Activated CD4-positive, alpha-beta memory T cell treated with anti-CD3 and anti-CD28 coated beads for 36 hours (primary cell): ENCODE measurements at regions of chr7 and their contacts with region 1.

Region 1: DNA sequence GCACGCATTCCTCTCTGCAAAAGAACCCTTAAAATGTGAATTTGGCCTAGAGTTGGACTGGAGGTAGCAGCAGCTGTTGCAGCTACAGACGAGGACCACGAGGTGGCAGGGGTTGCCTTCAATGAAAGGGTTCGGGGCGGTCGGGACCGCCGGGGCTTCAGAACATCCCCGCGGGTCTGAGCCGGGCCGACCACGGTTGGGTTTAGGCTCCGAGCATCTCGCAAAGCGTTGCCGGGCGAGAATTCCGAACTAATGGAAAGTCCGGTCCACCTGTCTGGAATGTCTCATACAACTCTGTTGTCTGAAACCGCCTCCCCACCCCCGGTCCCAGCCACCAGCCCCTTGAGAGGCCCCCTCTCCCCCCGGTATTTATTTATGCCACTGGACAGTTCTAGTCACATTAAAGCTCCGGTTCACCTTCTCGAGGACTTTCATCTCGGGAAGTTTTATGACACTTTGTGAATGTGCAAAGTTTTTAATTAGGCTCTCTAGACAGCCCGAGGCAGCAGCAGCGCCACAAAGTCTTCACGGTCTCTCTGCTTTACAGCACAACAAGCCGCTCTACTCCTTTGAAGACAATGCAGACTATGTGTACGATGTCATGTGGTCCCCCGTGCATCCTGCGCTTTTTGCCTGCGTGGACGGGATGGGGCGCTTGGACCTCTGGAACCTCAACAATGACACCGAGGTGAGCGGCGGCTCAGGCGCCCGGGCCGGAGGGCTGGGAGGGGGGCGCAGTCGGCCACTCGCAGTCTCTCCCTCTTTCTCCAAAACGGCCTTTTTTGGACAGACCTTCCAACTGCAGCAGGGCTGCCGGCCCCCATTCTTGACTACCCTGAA is 246.2 kb downstream of the SLC25A13 start:
- DNase-seq: peak; percentile 58
- H3K4me3 Mint-ChIP-seq: peak overlapping the region; percentile 53
- H3K27ac Mint-ChIP-seq: no peak overlapping the region
- H3K4me1 Mint-ChIP-seq: peaks cover 7% of the 10 kb centered on the region
- H3K27me3 Mint-ChIP-seq: peaks cover 20% of the 10 kb centered on the region

Region 2: GRCh38 chr7:96014617-96015016 is 61.1 kb before region 1 on chr7:
- CTCF ChIA-PET with region 1: no interaction called
- POLR2A ChIA-PET with region 1: no interaction called
- intact Hi-C with region 1: no loop called
- DNase-seq: no peak
- H3K4me3 Mint-ChIP-seq: no peak overlapping the region
- H3K27ac Mint-ChIP-seq: no peak overlapping the region
- H3K4me1 Mint-ChIP-seq: no peaks in the 10 kb centered on the region
- H3K27me3 Mint-ChIP-seq: peaks cover 17% of the 10 kb centered on the region

Region 3: GRCh38 chr7:96224685-96225084 is 149.0 kb after region 1 on chr7:
- CTCF ChIA-PET with region 1: no interaction called
- POLR2A ChIA-PET with region 1: no interaction called
- intact Hi-C with region 1: loop called (anchors 1 kb)
- DNase-seq: peak; percentile 13
- H3K4me3 Mint-ChIP-seq: no peak overlapping the region
- H3K27ac Mint-ChIP-seq: no peak overlapping the region
- H3K4me1 Mint-ChIP-seq: peaks cover 3% of the 10 kb centered on the region
- H3K27me3 Mint-ChIP-seq: no peaks in the 10 kb centered on the region